Endothelial cell of umbilical vein (primary cell): ENCODE measurements at regions of chr12 and their contacts with region 1.

Region 1: GRCh38 chr12:3777206-3777809 is 24.4 kb upstream of the CRACR2A start:
- DNase-seq: peak; percentile 60
- H3K4me3 ChIP-seq: no peak overlapping the region
- H3K27ac ChIP-seq: no peak overlapping the region
- H3K4me1 ChIP-seq: peaks cover 4% of the 10 kb centered on the region
- H3K27me3 ChIP-seq: peaks cover 10 to 13% of the 10 kb centered on the region in 2 experiments
- CTCF ChIP-seq: peak; percentile 59 to 67
- POLR2A ChIP-seq: no peak

Region 2: GRCh38 chr12:3313675-3314663 is 463.3 kb before region 1 on chr12:
- CTCF ChIA-PET with region 1: interaction called, 25 read pairs
- POLR2A ChIA-PET with region 1: no interaction called
- dilution Hi-C with region 1: no loop called
- intact Hi-C with region 1: no loop called
- DNase-seq: peak; percentile 20
- H3K4me3 ChIP-seq: no peak overlapping the region
- H3K27ac ChIP-seq: no peak overlapping the region
- H3K4me1 ChIP-seq: peaks cover 4% of the 10 kb centered on the region
- H3K27me3 ChIP-seq: peaks cover 0 to 1% of the 10 kb centered on the region in 2 experiments
- CTCF ChIP-seq: peak; percentile 10 to 62
- POLR2A ChIP-seq: no peak

Region 3: DNA sequence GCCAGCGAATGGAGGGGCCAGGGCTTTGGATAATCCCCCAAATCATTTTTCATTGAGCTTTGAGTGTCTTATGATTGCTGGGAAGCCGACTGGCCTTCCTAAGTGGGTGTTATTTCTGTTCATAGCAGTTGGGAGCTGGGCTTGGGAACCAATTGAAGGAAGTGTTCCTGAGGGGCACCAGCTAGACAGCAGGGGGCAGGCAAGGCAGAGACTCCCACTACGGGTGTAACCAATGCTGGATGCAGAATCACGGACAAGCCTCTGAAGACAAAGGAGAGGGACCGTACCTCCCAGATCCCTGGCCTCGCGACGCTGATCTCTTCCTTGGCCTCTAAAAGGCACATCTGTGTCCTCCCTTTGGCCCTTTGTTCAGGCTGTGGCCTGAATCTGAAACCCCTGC is 435.3 kb before region 1 on chr12:
- CTCF ChIA-PET with region 1: interaction called, 12 read pairs
- POLR2A ChIA-PET with region 1: no interaction called
- dilution Hi-C with region 1: no loop called
- intact Hi-C with region 1: no loop called
- DNase-seq: peak; percentile 37
- H3K4me3 ChIP-seq: no peak overlapping the region
- H3K27ac ChIP-seq: no peak overlapping the region
- H3K4me1 ChIP-seq: no peaks in the 10 kb centered on the region
- H3K27me3 ChIP-seq: no peaks in the 10 kb centered on the region
- CTCF ChIP-seq: peak; percentile 23 to 65
- POLR2A ChIP-seq: no peak

Region 4: DNA sequence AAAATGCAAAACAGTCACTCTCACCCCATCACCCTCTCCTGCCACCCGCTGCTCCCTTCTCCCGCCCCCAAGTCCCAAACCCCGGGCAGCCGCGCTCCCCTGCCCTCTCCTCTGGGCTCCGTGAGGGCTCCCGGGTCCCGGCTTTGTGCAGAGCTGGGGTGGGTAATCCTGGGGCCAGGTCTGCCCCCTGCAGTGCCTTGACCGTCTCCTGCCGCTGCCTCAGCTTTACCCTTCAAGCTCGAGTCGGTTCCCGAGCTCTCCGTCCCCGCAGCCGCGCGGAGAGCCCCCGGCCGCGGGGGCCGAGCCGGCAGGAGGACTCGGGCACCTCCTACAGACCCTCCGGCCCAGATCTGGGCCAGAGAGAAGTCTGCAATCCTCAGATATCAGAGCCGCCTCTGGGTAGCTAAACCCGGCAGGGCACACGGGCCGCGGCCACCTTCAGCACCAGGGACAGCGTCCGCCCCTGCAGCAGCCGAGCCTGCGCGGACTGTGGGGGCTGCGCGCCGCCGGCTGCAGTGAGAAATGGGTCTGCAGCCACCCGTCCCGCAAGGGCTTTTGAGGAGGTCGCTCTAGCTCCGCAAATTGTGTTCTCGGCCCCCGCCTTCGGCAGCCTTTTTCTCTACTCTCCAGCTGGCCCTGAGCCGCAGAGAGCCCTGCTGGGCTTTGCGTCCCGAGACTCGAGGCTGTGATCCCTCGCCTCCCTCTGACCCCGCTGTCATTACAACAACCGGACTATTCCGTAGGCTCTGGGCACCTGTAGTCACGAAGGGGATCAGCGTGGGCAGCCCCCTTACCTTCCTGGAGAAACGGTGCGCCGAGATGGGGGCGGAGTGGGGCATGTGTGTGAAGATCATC is 285.1 kb before region 1 on chr12:
- CTCF ChIA-PET with region 1: no interaction called
- POLR2A ChIA-PET with region 1: no interaction called
- dilution Hi-C with region 1: no loop called
- intact Hi-C with region 1: loop called (anchors 10 kb)
- DNase-seq: peak; percentile 48
- H3K4me3 ChIP-seq: no peak overlapping the region
- H3K27ac ChIP-seq: no peak overlapping the region
- H3K4me1 ChIP-seq: no peaks in the 10 kb centered on the region
- H3K27me3 ChIP-seq: peaks cover 50 to 51% of the 10 kb centered on the region in 2 experiments
- CTCF ChIP-seq: no peak
- POLR2A ChIP-seq: no peak

Region 5: GRCh38 chr12:3658327-3659163 is 118.8 kb before region 1 on chr12:
- CTCF ChIA-PET with region 1: interaction called, 12 read pairs
- POLR2A ChIA-PET with region 1: no interaction called
- dilution Hi-C with region 1: no loop called
- intact Hi-C with region 1: loop called (anchors 1 kb)
- DNase-seq: peak; percentile 20
- H3K4me3 ChIP-seq: no peak overlapping the region
- H3K27ac ChIP-seq: no peak overlapping the region
- H3K4me1 ChIP-seq: no peaks in the 10 kb centered on the region
- H3K27me3 ChIP-seq: no peaks in the 10 kb centered on the region
- CTCF ChIP-seq: peak; percentile 44 to 68
- POLR2A ChIP-seq: no peak

Region 6: DNA sequence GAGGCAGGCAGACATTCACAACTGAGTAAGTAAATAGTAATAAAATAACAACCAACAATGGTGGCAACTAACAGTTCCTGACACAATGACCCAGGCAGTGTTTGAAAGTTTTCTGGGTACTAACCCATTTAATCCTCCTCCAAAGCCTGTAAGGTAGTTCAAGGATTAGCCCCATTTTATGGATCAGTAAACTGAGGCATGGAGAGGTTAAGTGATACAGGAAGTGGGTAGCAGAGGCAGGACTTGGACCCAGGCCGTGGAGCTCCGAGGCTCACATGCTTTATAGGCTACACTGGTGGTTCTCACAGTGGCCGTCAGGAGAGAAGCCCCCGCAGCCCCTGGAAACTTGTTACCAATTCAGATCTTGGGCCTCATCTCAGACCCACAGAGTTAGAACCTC is 41.9 kb before region 1 on chr12:
- CTCF ChIA-PET with region 1: no interaction called
- POLR2A ChIA-PET with region 1: no interaction called
- dilution Hi-C with region 1: no loop called
- intact Hi-C with region 1: no loop called
- DNase-seq: no peak
- H3K4me3 ChIP-seq: no peak overlapping the region
- H3K27ac ChIP-seq: no peak overlapping the region
- H3K4me1 ChIP-seq: no peaks in the 10 kb centered on the region
- H3K27me3 ChIP-seq: no peaks in the 10 kb centered on the region
- CTCF ChIP-seq: no peak
- POLR2A ChIP-seq: no peak

Region 7: GRCh38 chr12:3803865-3804472 is 26.7 kb after region 1 on chr12:
- CTCF ChIA-PET with region 1: interaction called, 12 read pairs
- POLR2A ChIA-PET with region 1: no interaction called
- dilution Hi-C with region 1: no loop called
- intact Hi-C with region 1: no loop called
- DNase-seq: peak; percentile 59
- H3K4me3 ChIP-seq: no peak overlapping the region
- H3K27ac ChIP-seq: no peak overlapping the region
- H3K4me1 ChIP-seq: no peaks in the 10 kb centered on the region
- H3K27me3 ChIP-seq: no peaks in the 10 kb centered on the region
- CTCF ChIP-seq: peak; percentile 88 to 90
- POLR2A ChIP-seq: no peak

Region 8: DNA sequence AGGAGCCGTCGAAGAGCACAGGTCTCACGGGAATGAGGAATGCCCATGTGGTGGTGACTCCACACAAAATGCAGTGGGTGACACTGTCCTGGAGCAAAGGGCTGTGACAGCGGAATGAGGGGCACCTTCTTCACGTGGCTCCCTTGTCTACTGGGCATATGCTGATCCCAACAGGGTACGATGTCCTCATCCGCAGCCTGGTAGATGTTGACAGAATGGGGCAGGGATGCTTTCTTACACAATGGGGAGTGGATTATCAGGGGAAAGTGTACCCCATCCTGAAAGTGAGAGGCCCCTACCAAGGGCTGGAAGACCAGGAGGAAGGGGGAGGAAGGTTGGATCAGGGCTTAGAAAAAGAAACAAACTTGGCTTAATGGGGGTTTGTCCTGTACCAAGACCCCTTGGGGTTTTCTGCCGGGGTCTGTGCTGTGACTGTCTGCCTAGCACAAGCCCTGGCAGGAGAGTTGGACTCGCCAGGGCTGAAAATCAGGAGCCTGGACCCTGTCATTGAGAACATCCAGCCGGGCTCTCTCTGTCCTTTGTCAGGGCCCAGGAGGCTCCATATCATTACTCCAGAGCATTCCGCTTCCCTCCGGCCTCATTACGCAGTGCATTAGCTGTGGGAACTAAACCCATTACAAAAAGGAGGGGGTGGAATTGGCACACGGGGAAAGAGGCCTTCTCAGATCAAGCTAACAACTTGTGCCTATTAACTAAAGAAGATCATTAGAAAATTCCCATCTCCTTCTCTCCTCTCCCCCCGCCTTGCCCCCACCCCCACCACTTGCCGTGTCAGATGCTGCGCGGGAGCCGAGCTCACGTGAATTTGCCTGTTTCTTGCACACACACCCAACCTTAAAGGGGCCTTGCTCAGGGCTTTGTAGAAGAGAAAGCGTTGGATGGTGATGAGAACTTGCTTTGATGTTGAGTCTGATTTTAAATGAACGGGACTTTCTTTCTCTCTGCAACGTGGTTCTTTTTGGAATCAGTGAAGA is 267.7 kb after region 1 on chr12:
- CTCF ChIA-PET with region 1: no interaction called
- POLR2A ChIA-PET with region 1: no interaction called
- dilution Hi-C with region 1: no loop called
- intact Hi-C with region 1: no loop called
- DNase-seq: no peak
- H3K4me3 ChIP-seq: no peak overlapping the region
- H3K27ac ChIP-seq: no peak overlapping the region
- H3K4me1 ChIP-seq: no peaks in the 10 kb centered on the region
- H3K27me3 ChIP-seq: no peaks in the 10 kb centered on the region
- CTCF ChIP-seq: no peak
- POLR2A ChIP-seq: no peak